Activated CD8-positive, alpha-beta T cell treated with anti-CD3 and anti-CD28 coated beads for 36 hours (primary cell): ENCODE measurements at regions of chr5 and their contacts with region 1.

Region 1: DNA sequence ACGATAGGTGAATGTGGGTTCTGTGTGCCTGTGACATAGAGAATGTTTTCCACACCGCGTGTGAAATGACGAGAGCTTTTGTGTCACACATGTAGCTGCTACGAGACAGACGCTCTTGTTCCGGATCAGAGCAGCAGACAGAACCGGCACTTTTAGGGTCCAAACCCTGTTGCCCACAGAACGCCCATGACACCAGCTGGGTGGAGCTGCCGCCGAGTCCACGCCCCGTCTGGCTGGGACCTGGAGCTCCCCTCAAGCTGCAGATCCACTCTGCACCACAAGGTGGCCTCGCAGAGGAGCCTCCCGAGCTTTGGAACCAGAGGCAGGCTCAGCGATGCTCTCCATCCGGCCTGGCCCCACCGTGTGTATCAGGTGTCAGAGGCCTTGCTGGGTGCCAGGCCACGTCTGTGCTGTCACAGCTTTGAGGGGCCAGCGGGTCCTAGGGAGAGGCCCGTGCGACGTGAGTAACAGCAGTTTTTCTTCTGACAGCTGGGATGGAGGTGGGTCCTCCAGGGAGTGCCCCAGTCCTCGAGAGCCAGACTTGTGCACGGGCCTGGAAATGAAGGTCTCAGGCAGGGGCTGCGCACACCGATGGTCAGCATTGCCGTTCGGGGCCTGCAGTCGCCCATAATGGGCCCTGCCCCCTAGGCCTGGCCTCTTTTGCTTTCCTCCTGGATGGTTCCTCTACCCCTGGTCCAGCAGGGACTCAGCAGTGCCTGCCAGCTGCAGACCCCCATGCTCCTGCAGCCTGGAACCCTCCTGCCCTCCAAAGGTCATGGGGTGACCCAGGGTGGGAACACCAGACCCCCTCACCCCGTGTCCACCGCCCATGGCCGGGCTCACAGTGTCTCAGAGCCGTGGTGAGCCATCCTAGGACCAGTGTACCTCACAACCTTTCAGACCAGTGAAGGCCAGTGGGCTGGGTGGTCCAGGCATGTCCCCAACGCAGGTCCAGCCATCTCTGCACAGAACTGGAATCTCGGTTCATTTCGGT is 2.5 kb upstream of the LRRC14B start:
- DNase-seq: peak; percentile 95
- ATAC-seq: peak; percentile 99
- H3K4me3 Mint-ChIP-seq: no peak overlapping the region
- H3K27ac Mint-ChIP-seq: peak overlapping the region; percentile 5
- H3K4me1 Mint-ChIP-seq: peaks cover 13% of the 10 kb centered on the region
- H3K27me3 Mint-ChIP-seq: no peaks in the 10 kb centered on the region
- CTCF ChIP-seq: peak; percentile 94

Region 2: DNA sequence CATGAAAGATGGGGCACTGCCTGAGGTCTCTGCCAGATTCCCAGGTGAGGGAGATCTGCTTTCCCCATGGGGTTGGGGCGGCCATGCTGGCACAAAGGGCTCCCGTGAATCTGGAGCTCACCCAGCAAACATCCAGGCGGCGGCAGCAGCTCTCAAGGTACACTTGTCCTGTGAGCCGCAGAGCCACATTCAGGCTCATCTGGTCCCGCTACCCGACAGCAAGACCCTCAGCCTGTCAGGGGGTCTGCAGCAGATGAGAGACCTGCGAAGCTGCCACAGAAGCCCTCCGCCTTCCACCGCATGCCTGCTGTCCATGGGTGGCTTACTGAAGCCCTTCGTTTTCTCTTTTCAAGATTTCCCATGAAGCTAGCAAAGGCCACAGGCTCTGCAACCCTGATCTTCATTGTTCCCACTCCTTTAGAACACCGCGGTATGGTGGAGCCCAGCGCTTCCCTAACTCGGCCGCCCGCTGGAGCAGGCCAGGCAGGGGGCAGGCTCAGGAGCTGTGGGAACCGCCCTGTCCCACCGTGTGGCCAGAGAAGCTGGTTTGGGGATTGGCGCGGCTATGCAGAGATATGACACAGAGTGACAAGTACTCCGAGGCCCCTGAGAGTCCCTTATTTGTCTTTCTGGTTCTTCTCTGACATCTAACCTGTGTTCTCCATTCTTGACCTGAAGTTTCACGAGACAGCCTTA is 11.3 kb after region 1 on chr5:
- CTCF ChIA-PET with region 1: interaction called, 21 read pairs
- POLR2A ChIA-PET with region 1: interaction called, 4 read pairs
- intact Hi-C with region 1: no loop called
- DNase-seq: no peak
- ATAC-seq: no peak
- H3K4me3 Mint-ChIP-seq: no peak overlapping the region
- H3K27ac Mint-ChIP-seq: no peak overlapping the region
- H3K4me1 Mint-ChIP-seq: peaks cover 2% of the 10 kb centered on the region
- H3K27me3 Mint-ChIP-seq: no peaks in the 10 kb centered on the region
- CTCF ChIP-seq: no peak

Region 3: GRCh38 chr5:415928-416635 is 227.3 kb after region 1 on chr5:
- CTCF ChIA-PET with region 1: no interaction called
- POLR2A ChIA-PET with region 1: no interaction called
- intact Hi-C with region 1: no loop called
- DNase-seq: no peak
- ATAC-seq: no peak
- H3K4me3 Mint-ChIP-seq: no peak overlapping the region
- H3K27ac Mint-ChIP-seq: no peak overlapping the region
- H3K4me1 Mint-ChIP-seq: peaks cover 16% of the 10 kb centered on the region
- H3K27me3 Mint-ChIP-seq: no peaks in the 10 kb centered on the region
- CTCF ChIP-seq: no peak